Endothelial cell of umbilical vein (primary cell): ENCODE measurements at regions of chr6 and their contacts with region 1.

Region 1: GRCh38 chr6:71190809-71191208 is 97.8 kb upstream of the OGFRL1 start:
- DNase-seq: peak; percentile 41
- H3K4me3 ChIP-seq: no peak overlapping the region
- H3K27ac ChIP-seq: no peak overlapping the region
- H3K4me1 ChIP-seq: no peaks in the 10 kb centered on the region
- H3K27me3 ChIP-seq: no peaks in the 10 kb centered on the region
- CTCF ChIP-seq: peak; percentile 10 to 14
- POLR2A ChIP-seq: no peak

Region 2: DNA sequence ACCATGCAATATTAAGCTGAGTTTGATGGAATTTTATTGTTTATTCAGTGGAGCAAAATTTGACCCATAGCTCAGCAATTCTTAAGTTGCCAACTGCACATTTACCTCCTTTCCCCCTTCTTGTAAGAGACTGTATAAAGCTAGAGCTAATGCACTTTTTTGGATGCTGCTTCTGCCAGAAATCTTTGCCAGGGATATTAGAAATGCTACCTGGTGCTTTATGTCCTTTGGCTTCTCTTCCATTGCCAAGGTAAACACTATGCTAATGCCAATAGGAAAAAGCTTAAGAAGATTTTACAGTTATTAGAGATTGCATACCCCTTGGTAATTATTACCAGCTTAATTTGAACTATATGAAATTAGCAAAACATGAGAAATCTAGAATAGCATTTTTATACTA is 18.8 kb after region 1 on chr6:
- CTCF ChIA-PET with region 1: interaction called, 10 read pairs
- POLR2A ChIA-PET with region 1: no interaction called
- dilution Hi-C with region 1: no loop called
- intact Hi-C with region 1: no loop called
- DNase-seq: no peak
- H3K4me3 ChIP-seq: no peak overlapping the region
- H3K27ac ChIP-seq: no peak overlapping the region
- H3K4me1 ChIP-seq: no peaks in the 10 kb centered on the region
- H3K27me3 ChIP-seq: no peaks in the 10 kb centered on the region
- CTCF ChIP-seq: no peak
- POLR2A ChIP-seq: no peak

Region 3: DNA sequence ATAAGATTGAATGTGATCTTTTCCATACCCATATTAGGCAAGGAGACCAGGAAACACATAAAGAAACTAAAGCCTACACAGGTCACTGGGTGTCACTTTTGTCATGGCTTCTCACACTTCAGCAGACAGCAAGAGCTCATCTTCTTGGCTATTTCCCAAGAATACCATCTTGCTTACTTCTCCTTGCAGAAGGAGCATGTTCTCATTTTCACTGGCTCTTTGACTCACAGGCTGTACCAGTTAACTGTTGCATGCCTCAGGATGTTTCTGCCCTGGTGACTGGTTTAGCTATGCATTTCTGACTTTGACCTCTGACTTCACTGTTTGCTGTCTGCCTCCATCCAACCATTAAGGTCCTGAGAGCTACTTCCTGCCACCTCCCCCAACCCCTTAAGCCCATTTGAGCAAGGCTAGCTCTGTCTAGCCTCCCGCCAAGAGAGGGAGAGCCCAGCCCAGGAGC is 57.5 kb after region 1 on chr6:
- CTCF ChIA-PET with region 1: interaction called, 8 read pairs
- POLR2A ChIA-PET with region 1: no interaction called
- dilution Hi-C with region 1: no loop called
- intact Hi-C with region 1: loop called (anchors 1 kb)
- DNase-seq: peak; percentile 56
- H3K4me3 ChIP-seq: no peak overlapping the region
- H3K27ac ChIP-seq: peak overlapping the region; percentile 73
- H3K4me1 ChIP-seq: peaks cover 53% of the 10 kb centered on the region
- H3K27me3 ChIP-seq: no peaks in the 10 kb centered on the region
- CTCF ChIP-seq: no peak
- POLR2A ChIP-seq: no peak

Region 4: GRCh38 chr6:71288228-71289001 is 97.6 kb after region 1 on chr6 and contains the start of gene OGFRL1:
- CTCF ChIA-PET with region 1: interaction called, 72 read pairs
- POLR2A ChIA-PET with region 1: interaction called, 5 read pairs
- dilution Hi-C with region 1: no loop called
- intact Hi-C with region 1: loop called (anchors 2 kb)
- DNase-seq: peak; percentile 56
- H3K4me3 ChIP-seq: peak within 1 kb of the TSS; percentile 71 to 79 (median 75)
- H3K27ac ChIP-seq: peak within 1 kb of the TSS; percentile 60
- H3K4me1 ChIP-seq: peaks cover 28% of the 10 kb centered on the region
- H3K27me3 ChIP-seq: no peaks in the 10 kb centered on the region
- CTCF ChIP-seq: peak in 1 of 2 donors; percentile 5
- POLR2A ChIP-seq: peak; percentile 89
- total RNA-seq, gene OGFRL1: 19.4 and 21.1 TPM in 2 replicates

Region 5: GRCh38 chr6:71342772-71343171 is 152.0 kb after region 1 on chr6:
- CTCF ChIA-PET with region 1: interaction called, 17 read pairs
- POLR2A ChIA-PET with region 1: no interaction called
- dilution Hi-C with region 1: no loop called
- intact Hi-C with region 1: no loop called
- DNase-seq: no peak
- H3K4me3 ChIP-seq: no peak overlapping the region
- H3K27ac ChIP-seq: no peak overlapping the region
- H3K4me1 ChIP-seq: no peaks in the 10 kb centered on the region
- H3K27me3 ChIP-seq: no peaks in the 10 kb centered on the region
- CTCF ChIP-seq: no peak
- POLR2A ChIP-seq: no peak

Region 6: DNA sequence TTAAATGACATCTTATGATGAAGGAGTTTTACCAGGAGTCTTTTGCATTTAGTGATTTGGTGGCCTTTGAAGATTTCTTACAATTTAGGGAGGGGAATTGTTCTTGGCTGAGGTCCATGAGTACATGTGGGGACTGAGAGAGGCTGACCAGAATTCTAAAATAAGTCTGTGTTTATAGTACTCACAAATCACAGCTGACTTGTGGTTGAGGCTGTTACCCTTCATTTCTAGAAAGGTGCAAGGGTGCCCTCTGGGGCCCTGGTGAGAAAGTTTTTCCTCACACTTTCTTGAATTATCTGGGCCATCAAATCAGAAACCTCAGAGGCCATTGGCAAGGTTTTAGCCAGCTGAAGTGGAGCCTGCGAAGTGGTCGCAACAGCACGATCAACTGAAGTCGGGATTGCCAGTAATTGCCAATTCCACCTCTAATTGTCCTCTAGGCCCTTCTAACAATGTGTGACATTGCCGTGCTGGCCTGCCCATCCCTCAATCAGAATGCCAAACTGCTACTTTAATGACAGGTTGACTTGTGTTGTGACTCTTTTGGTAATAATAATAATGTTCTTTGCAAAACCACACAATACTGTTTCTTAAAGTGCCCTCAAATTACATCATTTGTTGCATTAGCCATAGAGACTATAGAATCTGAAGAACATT is 319.4 kb after region 1 on chr6:
- CTCF ChIA-PET with region 1: interaction called, 58 read pairs
- POLR2A ChIA-PET with region 1: no interaction called
- dilution Hi-C with region 1: no loop called
- intact Hi-C with region 1: loop called (anchors 1 kb)
- DNase-seq: peak; percentile 79
- H3K4me3 ChIP-seq: no peak overlapping the region
- H3K27ac ChIP-seq: no peak overlapping the region
- H3K4me1 ChIP-seq: peaks cover 7% of the 10 kb centered on the region
- H3K27me3 ChIP-seq: no peaks in the 10 kb centered on the region
- CTCF ChIP-seq: peak; percentile 57 to 59
- POLR2A ChIP-seq: no peak